ENCODE measurements at regions of chr14 and their contacts with region 1.

Region 1: GRCh38 chr14:92121670-92122350 is at the starts of genes CPSF2 and NDUFB1:
- DNase-seq: peak; percentile 85 to 88 (median 85)
- H3K4me3 ChIP-seq: peak within 1 kb of the TSS; percentile 98
- H3K4me3 Mint-ChIP-seq: peak within 1 kb of the TSS; percentile 96 to 100 (median 99)
- H3K27ac ChIP-seq: peak within 1 kb of the TSS; percentile 88
- H3K27ac Mint-ChIP-seq: peak within 1 kb of the TSS; percentile 98 to 100 (median 99)
- H3K4me1 ChIP-seq: peaks cover 69% of the 10 kb centered on the region
- H3K4me1 Mint-ChIP-seq: peaks cover 27 to 59% (median 37%) of the 10 kb centered on the region in 4 donors
- H3K27me3 ChIP-seq: no peaks in the 10 kb centered on the region
- H3K27me3 Mint-ChIP-seq: peaks cover 0 to 2% of the 10 kb centered on the region in 2 donors
- total RNA-seq, gene CPSF2: 71.2 to 71.9 TPM
- total RNA-seq, gene NDUFB1: 94.6 to 96.0 TPM

Region 2: DNA sequence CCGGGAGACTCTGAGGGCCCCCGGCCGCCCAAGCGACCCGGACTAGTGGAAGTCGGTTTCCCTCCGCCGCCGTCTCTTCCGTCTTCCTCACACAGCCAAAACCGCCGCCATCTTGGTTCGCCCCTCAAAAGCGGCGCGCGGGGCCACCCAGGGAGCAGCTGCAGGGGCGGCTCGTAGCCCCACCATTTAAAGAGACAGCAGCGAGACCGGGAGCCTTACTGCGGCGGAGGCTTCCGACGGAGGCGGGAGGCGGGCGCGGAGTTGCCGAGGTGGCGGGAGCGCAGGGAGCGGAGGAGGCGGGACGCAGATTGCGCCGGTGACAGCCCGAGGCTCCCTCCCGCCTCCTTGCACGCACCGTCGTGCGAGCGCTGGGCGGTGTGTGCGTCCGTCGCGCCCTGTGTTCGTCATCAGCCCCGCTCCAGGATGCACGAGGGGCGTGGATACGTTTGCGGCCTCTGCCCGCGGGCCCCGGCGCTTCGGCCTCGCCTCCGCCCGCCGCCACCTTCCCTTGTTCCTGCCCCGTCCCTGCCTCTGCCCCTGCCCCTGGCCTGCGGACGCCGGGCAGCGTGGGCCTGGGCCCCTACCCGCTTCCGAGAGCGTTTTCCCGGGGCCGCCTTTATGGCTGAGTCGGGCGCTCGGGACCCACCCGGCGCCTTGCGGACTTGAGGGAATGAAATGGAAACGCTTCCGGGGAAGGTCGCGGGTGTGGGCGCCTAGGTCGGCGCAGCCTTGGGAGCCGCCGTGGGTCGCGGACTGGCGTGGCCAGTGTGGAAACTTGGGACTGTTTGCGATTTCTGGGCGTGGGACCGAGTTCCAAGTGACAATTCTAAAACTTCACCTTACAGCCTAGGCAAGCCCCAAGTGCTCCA is 611.4 kb before region 1 on chr14 and contains the start of gene PPP4R3A:
- CTCF ChIA-PET with region 1: no interaction called
- POLR2A ChIA-PET with region 1: interaction called, 8 read pairs
- intact Hi-C with region 1: loop called (anchors 5 kb)
- DNase-seq: peak; percentile 93 to 95 (median 95)
- H3K4me3 ChIP-seq: peak within 1 kb of the TSS; percentile 59 to 88
- H3K4me3 Mint-ChIP-seq: peak within 1 kb of the TSS; percentile 97 to 100 (median 100)
- H3K27ac ChIP-seq: peak within 1 kb of the TSS; percentile 99
- H3K27ac Mint-ChIP-seq: peak within 1 kb of the TSS; percentile 99 to 100 (median 100)
- H3K4me1 ChIP-seq: peaks cover 37% of the 10 kb centered on the region
- H3K4me1 Mint-ChIP-seq: peaks cover 21 to 44% (median 29%) of the 10 kb centered on the region in 4 donors
- H3K27me3 ChIP-seq: no peaks in the 10 kb centered on the region
- H3K27me3 Mint-ChIP-seq: no peaks in the 10 kb centered on the region
- total RNA-seq, gene PPP4R3A: 162 to 169 TPM

Region 3: DNA sequence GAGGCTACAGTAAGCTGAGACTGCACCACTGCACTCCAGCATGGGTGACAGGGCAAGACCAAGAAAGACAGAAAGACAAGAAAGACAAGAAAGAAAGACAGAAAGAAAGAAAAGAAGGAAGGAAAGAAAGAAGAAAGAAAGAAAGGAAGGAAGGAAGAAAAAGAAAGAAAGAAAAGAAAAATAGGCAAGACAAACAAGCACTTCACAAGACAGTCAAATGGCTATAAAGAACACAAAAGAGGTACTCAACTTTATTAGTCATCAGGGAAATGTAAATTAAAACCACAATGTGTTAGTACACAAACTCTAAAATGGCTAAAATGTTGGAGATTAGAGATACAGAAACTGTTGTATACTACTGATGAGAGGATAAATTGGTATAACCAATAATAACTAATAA is 22.0 kb before region 1 on chr14:
- CTCF ChIA-PET with region 1: no interaction called
- POLR2A ChIA-PET with region 1: interaction called, 11 read pairs
- intact Hi-C with region 1: no loop called
- DNase-seq: no peak
- H3K4me3 ChIP-seq: no peak overlapping the region
- H3K4me3 Mint-ChIP-seq: no peak overlapping the region
- H3K27ac ChIP-seq: no peak overlapping the region
- H3K27ac Mint-ChIP-seq: peak overlapping the region in 1 of 7 donors; percentile 9
- H3K4me1 ChIP-seq: peaks cover 29% of the 10 kb centered on the region
- H3K4me1 Mint-ChIP-seq: peaks cover 18 to 44% (median 30%) of the 10 kb centered on the region in 4 donors
- H3K27me3 ChIP-seq: no peaks in the 10 kb centered on the region
- H3K27me3 Mint-ChIP-seq: no peaks in the 10 kb centered on the region

Region 4: DNA sequence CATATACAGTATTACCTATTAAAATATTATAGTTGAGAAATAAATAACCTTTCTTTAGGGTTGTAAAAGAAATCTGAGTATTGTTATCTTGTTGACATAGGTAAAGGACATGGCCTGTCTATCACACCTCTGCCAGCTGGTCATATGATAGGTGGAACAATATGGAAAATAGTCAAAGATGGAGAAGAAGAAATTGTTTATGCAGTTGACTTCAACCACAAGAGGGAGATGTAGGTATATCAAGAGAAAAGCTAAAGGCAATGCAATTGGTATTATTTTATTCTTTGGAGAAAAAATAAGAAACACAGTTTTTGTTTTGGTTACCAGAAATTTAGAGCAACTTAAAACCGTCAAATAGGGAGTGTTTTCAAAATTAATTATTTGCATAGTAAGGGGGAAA is 13.5 kb after region 1 on chr14:
- CTCF ChIA-PET with region 1: interaction called, 21 read pairs
- POLR2A ChIA-PET with region 1: interaction called, 8 read pairs
- intact Hi-C with region 1: no loop called
- DNase-seq: peak in 2 of 5 donors; percentile 10 to 13
- H3K4me3 ChIP-seq: no peak overlapping the region
- H3K4me3 Mint-ChIP-seq: no peak overlapping the region
- H3K27ac ChIP-seq: no peak overlapping the region
- H3K27ac Mint-ChIP-seq: no peak overlapping the region
- H3K4me1 ChIP-seq: no peaks in the 10 kb centered on the region
- H3K4me1 Mint-ChIP-seq: peaks cover under 1 to 2% (median 1%) of the 10 kb centered on the region in 4 donors
- H3K27me3 ChIP-seq: no peaks in the 10 kb centered on the region
- H3K27me3 Mint-ChIP-seq: no peaks in the 10 kb centered on the region

Region 5: GRCh38 chr14:92475451-92476187 is 353.8 kb after region 1 on chr14:
- CTCF ChIA-PET with region 1: no interaction called
- POLR2A ChIA-PET with region 1: no interaction called
- intact Hi-C with region 1: no loop called
- DNase-seq: no peak
- H3K4me3 ChIP-seq: no peak overlapping the region
- H3K4me3 Mint-ChIP-seq: no peak overlapping the region
- H3K27ac ChIP-seq: no peak overlapping the region
- H3K27ac Mint-ChIP-seq: no peak overlapping the region
- H3K4me1 ChIP-seq: no peaks in the 10 kb centered on the region
- H3K4me1 Mint-ChIP-seq: peaks cover 0 to 16% (median 2%) of the 10 kb centered on the region in 4 donors
- H3K27me3 ChIP-seq: no peaks in the 10 kb centered on the region
- H3K27me3 Mint-ChIP-seq: peaks cover 0 to 3% of the 10 kb centered on the region in 2 donors

Region 6: DNA sequence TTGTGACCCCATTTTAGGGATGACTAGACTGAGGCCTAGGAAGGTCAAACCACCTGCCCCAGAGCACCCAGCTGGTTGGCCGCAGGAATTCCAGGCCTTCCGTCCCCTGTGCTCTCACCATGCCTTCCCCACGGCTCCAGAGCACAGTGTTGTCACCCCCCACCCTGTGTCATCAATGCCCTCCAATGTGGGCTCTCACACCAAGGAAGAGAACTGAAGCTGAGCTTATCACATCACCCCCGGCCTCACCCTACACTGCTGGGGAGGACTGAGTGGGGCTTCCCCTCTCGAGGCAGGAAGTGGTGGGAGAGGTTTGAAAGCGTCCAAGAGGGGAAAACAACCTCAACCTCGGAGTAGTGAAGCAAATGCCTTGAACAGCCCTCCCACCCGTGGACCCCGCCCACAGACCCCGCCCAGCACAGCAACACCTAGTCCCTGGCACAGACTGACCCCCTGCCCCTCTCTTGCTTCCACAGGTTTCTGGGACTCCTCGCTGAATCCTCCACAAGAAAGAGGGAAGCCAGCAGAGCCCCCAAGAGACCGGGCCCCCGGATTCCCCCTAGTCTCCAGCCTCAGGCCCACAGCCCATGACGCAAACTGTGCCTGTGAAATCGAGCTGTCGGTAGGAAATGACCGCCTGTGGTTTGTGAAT is 529.4 kb after region 1 on chr14:
- CTCF ChIA-PET with region 1: no interaction called
- POLR2A ChIA-PET with region 1: interaction called, 10 read pairs
- intact Hi-C with region 1: no loop called
- DNase-seq: peak; percentile 82 to 95 (median 85)
- H3K4me3 ChIP-seq: peak overlapping the region; percentile 47 to 58
- H3K4me3 Mint-ChIP-seq: peak overlapping the region; percentile 92 to 99 (median 98)
- H3K27ac ChIP-seq: peak overlapping the region; percentile 84
- H3K27ac Mint-ChIP-seq: peak overlapping the region; percentile 96 to 100 (median 99)
- H3K4me1 ChIP-seq: peaks cover 80% of the 10 kb centered on the region
- H3K4me1 Mint-ChIP-seq: peaks cover 51 to 94% (median 67%) of the 10 kb centered on the region in 4 donors
- H3K27me3 ChIP-seq: no peaks in the 10 kb centered on the region
- H3K27me3 Mint-ChIP-seq: no peaks in the 10 kb centered on the region

Measured in CD4-positive, alpha-beta memory T cell (primary cell).